ENCODE measurements at regions of chr9 and their contacts with region 1.

Region 1: DNA sequence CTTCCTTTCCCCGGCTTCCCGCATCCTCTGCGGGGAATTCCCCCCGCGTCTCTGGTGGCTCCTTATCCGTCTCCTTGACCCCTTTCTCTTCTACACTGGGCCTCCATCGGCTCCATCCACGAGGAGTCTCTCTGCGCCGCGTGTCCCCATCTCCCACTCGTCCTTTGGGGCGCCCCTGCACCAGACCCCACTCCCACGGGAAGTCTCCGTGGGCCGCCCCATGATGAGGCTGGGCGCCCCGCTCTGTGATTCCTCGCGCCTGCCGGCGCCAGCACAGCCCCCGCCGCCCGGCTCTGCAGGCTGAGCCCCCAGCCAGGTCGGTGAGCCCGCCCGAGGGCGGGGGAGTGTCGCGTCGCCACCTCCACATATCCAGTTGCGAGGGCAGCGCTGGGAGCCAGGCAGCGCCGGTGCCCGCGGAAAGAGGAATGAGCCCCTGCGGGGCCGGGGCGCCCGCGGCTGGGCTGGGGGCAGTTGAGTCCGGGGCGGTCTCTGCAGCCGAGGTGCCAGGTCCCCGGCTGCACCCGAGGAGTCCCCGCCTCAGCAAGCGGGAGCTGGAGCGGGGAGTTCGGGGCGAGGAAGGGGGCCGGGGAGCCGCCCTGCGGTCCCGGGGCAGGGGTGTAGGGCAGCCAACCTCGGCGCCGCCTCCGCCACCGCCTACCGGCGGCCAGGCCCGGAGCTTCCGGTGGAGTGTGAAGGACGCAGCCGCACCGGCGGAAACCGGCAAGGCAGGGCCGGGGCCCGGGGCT is 2.1 kb upstream of the TRAF1 start:
- DNase-seq: peak; percentile 49 to 85 (median 72)
- ATAC-seq: peak; percentile 48 to 52
- H3K4me3 Mint-ChIP-seq: peak overlapping the region; percentile 92 to 97 (median 94)
- H3K27ac Mint-ChIP-seq: peak overlapping the region; percentile 95 to 100 (median 98)
- H3K4me1 Mint-ChIP-seq: peaks cover 45 to 90% (median 85%) of the 10 kb centered on the region in 4 donors
- H3K27me3 Mint-ChIP-seq: no peaks in the 10 kb centered on the region

Region 2: GRCh38 chr9:120438836-120439546 is 489.7 kb before region 1 on chr9:
- POLR2A ChIA-PET with region 1: no interaction called
- DNase-seq: no peak
- ATAC-seq: no peak
- H3K4me3 Mint-ChIP-seq: no peak overlapping the region
- H3K27ac Mint-ChIP-seq: peak overlapping the region in 1 of 10 donors; percentile 67
- H3K4me1 Mint-ChIP-seq: peaks cover 2 to 25% (median 8%) of the 10 kb centered on the region in 4 donors
- H3K27me3 Mint-ChIP-seq: no peaks in the 10 kb centered on the region

Region 3: DNA sequence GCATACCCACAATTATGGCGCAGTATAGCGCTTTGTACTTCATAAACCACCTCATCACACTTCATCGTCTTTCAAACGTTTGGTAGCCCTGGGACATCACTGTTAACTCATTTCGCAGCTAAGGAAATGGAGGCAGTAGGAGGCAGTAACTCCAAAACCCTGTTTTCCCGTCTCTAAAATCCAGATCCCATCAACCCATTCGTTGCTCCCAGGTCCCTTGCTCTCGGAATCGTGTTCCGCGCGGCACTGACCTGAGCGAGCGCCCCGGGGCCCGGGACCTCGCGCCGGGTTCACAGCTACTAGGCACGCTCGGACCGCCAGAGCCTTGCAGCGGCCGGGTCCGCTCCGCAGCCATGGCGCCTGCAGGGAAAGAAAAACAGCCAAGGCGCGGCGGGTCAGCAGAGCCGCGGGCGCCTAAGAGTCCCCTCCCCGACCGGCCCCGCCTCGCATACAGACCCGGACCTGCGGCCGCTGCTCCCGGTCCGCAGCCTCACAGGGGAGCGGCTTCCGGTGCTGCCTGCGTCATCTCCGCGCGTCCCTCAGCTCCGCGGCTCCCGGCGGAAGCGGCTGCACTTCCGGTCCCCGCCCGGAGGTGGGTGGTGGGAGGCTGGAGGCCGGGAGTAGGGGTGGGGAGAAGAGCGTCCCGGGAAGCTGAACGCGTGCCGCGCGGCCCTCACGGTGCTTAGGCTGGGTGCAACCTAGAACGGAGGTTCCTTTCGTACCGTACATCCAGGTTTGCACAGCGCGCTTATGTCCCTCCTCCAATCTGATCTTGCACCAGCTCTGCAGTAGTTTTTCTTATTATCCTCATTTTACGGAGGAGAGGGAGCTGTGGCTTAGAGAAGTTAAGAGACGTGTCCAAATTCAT is 135.5 kb before region 1 on chr9 and contains the start of gene FBXW2:
- POLR2A ChIA-PET with region 1: interaction called, 10 read pairs
- DNase-seq: peak; percentile 75 to 87 (median 80)
- ATAC-seq: peak; percentile 81 to 84
- H3K4me3 Mint-ChIP-seq: peak within 1 kb of the TSS; percentile 82 to 98 (median 91)
- H3K27ac Mint-ChIP-seq: peak within 1 kb of the TSS; percentile 90 to 99 (median 97)
- H3K4me1 Mint-ChIP-seq: peaks cover 20 to 58% (median 56%) of the 10 kb centered on the region in 4 donors
- H3K27me3 Mint-ChIP-seq: no peaks in the 10 kb centered on the region
- polyA plus RNA-seq, gene FBXW2: 29.6 to 37.1 (median 31.7) TPM

Region 4: DNA sequence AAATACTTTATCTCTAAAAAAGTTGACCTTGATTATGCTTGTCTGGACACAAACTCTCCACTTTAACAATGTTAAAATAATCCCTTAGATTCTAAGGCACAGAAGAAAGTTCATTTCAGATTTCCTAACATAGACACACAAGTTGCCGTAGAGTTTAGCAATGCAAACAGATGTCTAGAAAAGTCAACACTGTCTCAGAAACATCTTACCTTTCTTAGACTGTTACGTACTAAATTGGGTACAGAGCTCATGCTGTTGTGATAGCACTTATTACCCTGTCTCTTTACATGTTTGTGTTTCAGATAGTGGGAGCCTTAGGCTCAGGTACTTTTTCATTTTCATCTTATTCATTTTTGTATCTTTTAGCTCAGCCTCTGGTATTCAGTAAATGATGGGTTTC is 69.5 kb after region 1 on chr9:
- POLR2A ChIA-PET with region 1: no interaction called
- DNase-seq: no peak
- ATAC-seq: no peak
- H3K4me3 Mint-ChIP-seq: no peak overlapping the region
- H3K27ac Mint-ChIP-seq: no peak overlapping the region
- H3K4me1 Mint-ChIP-seq: peaks cover 0 to 2% (median 0%) of the 10 kb centered on the region in 4 donors
- H3K27me3 Mint-ChIP-seq: no peaks in the 10 kb centered on the region